Heart right ventricle (tissue), 16 donors: ENCODE measurements at regions of chr7 and their contacts with region 1.

Region 1: GRCh38 chr7:117212969-117213877 is 109.6 kb downstream of the WNT2 start:
- DNase-seq: peak in 1 of 2 donors; percentile 47
- ATAC-seq: peak in 2 of 8 donors; percentile 48 to 69
- H3K4me3 ChIP-seq: no peak overlapping the region
- H3K27ac ChIP-seq: no peak overlapping the region
- H3K4me1 ChIP-seq: no peaks in the 10 kb centered on the region
- H3K27me3 ChIP-seq: no peaks in the 10 kb centered on the region
- CTCF ChIP-seq: peak; percentile 28 to 94 (median 82)

Region 2: DNA sequence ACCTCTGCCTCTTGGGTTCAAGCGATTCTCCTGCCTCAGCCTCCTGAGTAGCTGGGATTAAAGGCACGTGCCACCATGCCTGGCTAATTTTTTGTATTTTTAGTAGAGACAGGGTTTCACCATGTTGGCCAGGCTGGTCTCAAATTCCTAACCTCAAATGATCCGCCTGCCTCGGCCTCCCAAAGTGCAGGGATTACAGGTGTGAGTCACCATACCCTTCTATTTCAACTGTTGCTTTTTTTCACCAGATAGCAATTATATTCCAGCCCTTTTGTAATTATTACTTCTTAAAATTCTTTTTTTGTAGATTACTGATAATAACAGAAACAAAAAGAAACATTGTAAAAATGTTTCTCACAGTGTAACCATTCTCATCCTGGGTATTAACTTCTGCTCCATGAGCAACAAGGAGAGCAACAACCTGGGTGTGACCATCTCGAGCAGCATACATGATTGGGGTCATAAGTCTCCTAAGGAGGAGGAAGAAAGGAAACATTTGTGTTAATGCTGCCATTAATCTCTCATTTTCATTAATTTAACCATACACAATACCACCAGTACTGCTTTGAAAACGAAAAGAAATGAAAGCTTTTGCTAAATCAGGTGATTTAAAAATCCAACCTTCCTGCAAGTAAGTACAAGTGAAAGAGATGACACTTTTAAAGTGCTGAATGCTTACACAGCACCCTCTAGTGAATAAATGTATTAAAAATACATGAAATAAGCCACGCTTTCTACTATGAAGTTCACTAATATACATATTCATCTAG is 172.3 kb after region 1 on chr7:
- intact Hi-C with region 1: loop called in 5 of 10 experiments (anchors 5 to 10 kb)
- DNase-seq: no peak
- ATAC-seq: no peak
- H3K4me3 ChIP-seq: no peak overlapping the region
- H3K27ac ChIP-seq: no peak overlapping the region
- H3K4me1 ChIP-seq: no peaks in the 10 kb centered on the region
- H3K27me3 ChIP-seq: peaks cover 0 to 3% (median 0%) of the 10 kb centered on the region in 7 donors
- CTCF ChIP-seq: peak in 8 of 9 donors; percentile 14 to 59 (median 42)

Region 3: DNA sequence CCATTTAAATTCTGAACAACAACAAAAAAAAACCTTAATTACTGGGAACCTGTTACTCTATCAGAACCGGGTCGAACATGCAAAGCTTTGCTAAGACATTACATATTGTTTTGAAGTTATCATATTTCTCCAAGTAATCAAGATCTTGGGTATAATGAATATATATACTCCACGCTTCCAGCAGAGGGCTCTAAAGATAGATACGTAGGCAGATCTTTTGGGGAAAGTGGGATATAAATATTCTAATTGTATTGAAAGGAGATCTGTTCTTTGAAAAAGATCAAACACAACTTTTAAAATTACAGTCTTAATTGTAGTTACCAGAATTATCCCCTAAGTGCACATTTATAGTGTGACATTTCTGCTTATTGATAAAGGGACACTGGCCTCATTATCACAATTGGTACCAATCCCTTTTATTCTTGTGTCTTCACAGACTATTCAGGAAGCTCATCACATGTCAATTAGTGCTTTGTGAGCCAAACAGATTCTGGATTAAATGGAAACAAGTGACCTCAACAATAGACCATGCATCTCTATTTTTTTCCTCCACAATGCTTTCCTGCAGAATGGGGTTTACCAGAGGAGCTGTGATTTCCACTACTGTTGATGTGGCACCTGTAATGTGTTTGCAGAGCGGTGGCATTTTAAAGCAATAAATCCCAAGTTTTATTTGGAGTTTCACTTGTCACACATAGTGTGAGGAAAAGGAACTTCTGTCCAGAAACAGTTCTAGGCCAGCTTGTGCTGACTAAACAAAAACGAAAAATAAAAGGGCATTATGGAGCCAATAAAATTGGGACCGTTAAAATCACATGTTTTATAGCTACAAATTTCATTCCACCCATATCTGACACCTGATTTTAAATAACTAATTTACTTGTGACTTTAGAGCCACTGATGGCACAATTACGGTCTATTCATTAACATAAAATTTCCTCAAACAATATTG is 537.7 kb after region 1 on chr7:
- intact Hi-C with region 1: no loop called
- DNase-seq: no peak
- ATAC-seq: no peak
- H3K4me3 ChIP-seq: no peak overlapping the region
- H3K27ac ChIP-seq: no peak overlapping the region
- H3K4me1 ChIP-seq: peaks cover 0 to 10% (median 0%) of the 10 kb centered on the region in 9 donors
- H3K27me3 ChIP-seq: no peaks in the 10 kb centered on the region
- CTCF ChIP-seq: peak; percentile 23 to 69 (median 57)